ENCODE measurements at regions of chr6 and their contacts with region 1.

Region 1: GRCh38 chr6:144284783-144285547 is at the start of gene UTRN:
- DNase-seq: peak; percentile 83
- H3K4me3 ChIP-seq: peak within 1 kb of the TSS; percentile 79 to 95 (median 84)
- H3K27ac ChIP-seq: peak within 1 kb of the TSS; percentile 41
- H3K4me1 ChIP-seq: peaks cover 11% of the 10 kb centered on the region
- H3K27me3 ChIP-seq: no peaks in the 10 kb centered on the region
- CTCF ChIP-seq: no peak
- total RNA-seq, gene UTRN: 36.8 to 44.9 TPM

Region 2: DNA sequence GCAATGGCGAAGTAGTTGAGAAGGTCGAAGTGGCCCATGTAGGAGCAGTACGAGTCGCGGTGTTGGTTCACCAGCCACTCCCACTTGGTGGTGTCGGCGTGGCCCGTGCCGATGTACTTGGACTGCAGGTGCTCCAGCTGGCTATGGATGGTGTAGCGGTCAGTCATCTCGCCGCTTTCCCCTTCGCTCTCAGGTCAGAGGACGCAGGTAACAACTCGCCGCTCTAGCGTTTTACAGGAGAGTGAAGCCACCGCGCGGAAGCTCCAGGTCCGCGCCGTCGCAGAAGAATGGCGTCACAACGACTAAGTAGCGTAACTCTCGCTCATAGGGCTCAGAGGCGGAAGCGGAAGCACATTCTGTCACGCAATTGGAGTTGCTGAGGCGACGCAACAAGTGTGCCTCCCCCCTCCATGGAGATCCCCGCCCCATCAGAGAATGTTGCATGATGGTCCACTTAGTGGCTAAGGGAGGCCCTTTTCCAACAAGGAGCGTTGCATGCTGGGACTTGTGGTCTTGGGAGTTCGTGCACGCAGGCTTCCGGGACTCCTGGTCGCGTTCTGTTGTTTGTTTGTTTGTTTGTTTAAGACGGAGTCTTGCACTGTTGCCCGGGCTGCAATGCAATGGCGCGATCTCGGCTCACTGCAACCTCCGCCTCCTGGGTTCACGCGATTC is 189.5 kb before region 1 on chr6 and contains the start of gene SF3B5:
- CTCF ChIA-PET with region 1: no interaction called
- dilution Hi-C with region 1: no loop called
- in situ Hi-C with region 1: no loop called
- intact Hi-C with region 1: loop called (anchors 1 kb)
- DNase-seq: peak; percentile 100
- H3K4me3 ChIP-seq: peak within 1 kb of the TSS; percentile 58 to 91 (median 61)
- H3K27ac ChIP-seq: peak within 1 kb of the TSS; percentile 77
- H3K4me1 ChIP-seq: peaks cover 6% of the 10 kb centered on the region
- H3K27me3 ChIP-seq: no peaks in the 10 kb centered on the region
- CTCF ChIP-seq: no peak
- total RNA-seq, gene SF3B5: 81.9 to 132 TPM

Region 3: GRCh38 chr6:144215932-144216667 is 68.9 kb before region 1 on chr6:
- CTCF ChIA-PET with region 1: interaction called, 5 read pairs
- dilution Hi-C with region 1: no loop called
- in situ Hi-C with region 1: no loop called
- intact Hi-C with region 1: loop called (anchors 1 kb)
- DNase-seq: peak; percentile 94
- H3K4me3 ChIP-seq: peak overlapping the region; percentile 54 to 72 (median 65)
- H3K27ac ChIP-seq: peak overlapping the region; percentile 63
- H3K4me1 ChIP-seq: peaks cover 13% of the 10 kb centered on the region
- H3K27me3 ChIP-seq: no peaks in the 10 kb centered on the region
- CTCF ChIP-seq: peak; percentile 35 to 69

Region 4: GRCh38 chr6:144264270-144265060 is 20.5 kb before region 1 on chr6:
- CTCF ChIA-PET with region 1: no interaction called
- dilution Hi-C with region 1: no loop called
- in situ Hi-C with region 1: no loop called
- intact Hi-C with region 1: loop called (anchors 1 kb)
- DNase-seq: peak; percentile 80
- H3K4me3 ChIP-seq: peak overlapping the region in 1 of 3 experiments; percentile 2
- H3K27ac ChIP-seq: peak overlapping the region; percentile 76
- H3K4me1 ChIP-seq: peaks cover 27% of the 10 kb centered on the region
- H3K27me3 ChIP-seq: no peaks in the 10 kb centered on the region
- CTCF ChIP-seq: no peak

Region 5: DNA sequence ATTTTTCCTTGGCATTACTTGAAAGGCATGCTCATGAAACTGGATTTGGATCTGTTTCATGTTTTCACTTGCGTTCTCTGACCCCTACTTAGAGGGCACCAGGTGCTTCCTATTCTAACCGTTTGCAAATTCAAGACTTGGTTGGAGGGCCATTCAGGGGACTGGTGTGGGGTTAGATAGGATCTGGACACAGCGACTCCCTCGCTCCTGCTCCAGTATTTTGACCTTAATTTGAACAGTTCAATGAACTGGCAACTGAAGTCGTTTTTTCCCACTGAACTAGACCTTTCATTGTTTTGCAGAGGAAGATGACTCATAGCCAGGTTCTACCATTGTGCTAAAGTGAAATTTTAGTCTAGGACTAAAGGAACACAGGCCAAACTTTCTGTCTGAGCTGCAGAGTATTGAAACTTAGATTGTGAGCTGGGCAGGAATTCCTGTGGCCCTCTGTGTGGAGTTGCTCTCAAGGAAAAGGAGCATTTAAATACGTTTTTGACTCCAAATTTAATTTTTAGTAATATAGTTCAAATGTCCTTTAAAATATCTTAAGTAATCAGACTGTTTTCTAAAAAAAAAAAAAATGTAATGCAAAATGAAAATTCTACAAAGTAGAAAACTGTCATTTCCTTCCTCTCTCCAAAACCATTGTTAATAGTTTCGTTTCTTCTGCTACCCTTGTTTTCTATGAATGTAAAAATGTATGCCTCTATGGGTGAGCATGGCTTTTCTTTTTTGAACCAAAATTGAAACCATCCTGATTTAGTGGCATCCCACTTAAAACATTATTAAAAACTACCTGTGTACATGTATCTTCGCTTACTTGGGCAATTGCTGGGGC is 64.9 kb after region 1 on chr6:
- CTCF ChIA-PET with region 1: no interaction called
- dilution Hi-C with region 1: no loop called
- in situ Hi-C with region 1: no loop called
- intact Hi-C with region 1: loop called (anchors 2 kb)
- DNase-seq: peak; percentile 72
- H3K4me3 ChIP-seq: peak overlapping the region; percentile 2 to 19 (median 10)
- H3K27ac ChIP-seq: peak overlapping the region; percentile 54
- H3K4me1 ChIP-seq: peaks cover 31% of the 10 kb centered on the region
- H3K27me3 ChIP-seq: no peaks in the 10 kb centered on the region
- CTCF ChIP-seq: no peak

Region 6: GRCh38 chr6:144408161-144408560 is 123.2 kb after region 1 on chr6:
- CTCF ChIA-PET with region 1: no interaction called
- dilution Hi-C with region 1: no loop called
- in situ Hi-C with region 1: no loop called
- intact Hi-C with region 1: no loop called
- DNase-seq: no peak
- H3K4me3 ChIP-seq: no peak overlapping the region
- H3K27ac ChIP-seq: no peak overlapping the region
- H3K4me1 ChIP-seq: no peaks in the 10 kb centered on the region
- H3K27me3 ChIP-seq: no peaks in the 10 kb centered on the region
- CTCF ChIP-seq: no peak

Region 7: GRCh38 chr6:144482142-144482541 is 197.2 kb after region 1 on chr6:
- CTCF ChIA-PET with region 1: interaction called, 3 read pairs
- dilution Hi-C with region 1: no loop called
- in situ Hi-C with region 1: loop called in 1 of 2 experiments (anchors 10 kb)
- intact Hi-C with region 1: loop called (anchors 1 kb)
- DNase-seq: peak; percentile 60
- H3K4me3 ChIP-seq: no peak overlapping the region
- H3K27ac ChIP-seq: no peak overlapping the region
- H3K4me1 ChIP-seq: no peaks in the 10 kb centered on the region
- H3K27me3 ChIP-seq: no peaks in the 10 kb centered on the region
- CTCF ChIP-seq: peak; percentile 77 to 78

Measured in mammary epithelial cell (primary cell).